Left cardiac atrium (tissue), 4 donors: ENCODE measurements at regions of chr11 and their contacts with region 1.

Region 1: GRCh38 chr11:43643898-43644620 is 36.5 kb upstream of the HSD17B12 start:
- DNase-seq: peak; percentile 89
- ATAC-seq: peak; percentile 99 to 100

Region 2: DNA sequence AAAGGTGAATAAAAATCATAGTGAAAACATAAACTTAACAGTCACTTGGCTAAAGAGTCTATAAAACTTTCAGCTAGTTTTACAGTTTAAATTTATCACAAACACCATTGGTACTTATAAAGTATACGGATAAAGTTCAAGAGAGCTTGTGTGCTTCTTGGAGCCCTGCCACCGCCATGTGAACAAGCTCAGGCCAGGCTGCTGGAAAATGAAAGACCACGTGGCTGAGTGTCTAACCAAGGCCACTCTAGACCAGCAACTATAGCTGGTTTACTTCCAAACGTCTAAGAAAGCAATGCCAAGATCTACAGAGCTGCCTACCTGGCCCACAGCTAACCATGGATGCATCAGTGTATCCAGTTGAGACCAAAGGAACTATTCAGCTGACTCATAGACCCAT is 398.6 kb before region 1 on chr11:
- intact Hi-C with region 1: no loop called
- DNase-seq: no peak
- ATAC-seq: no peak

Region 3: GRCh38 chr11:43680521-43681400 is 36.7 kb after region 1 on chr11 and contains the start of gene HSD17B12:
- intact Hi-C with region 1: loop called in 1 of 2 experiments (anchors 5 kb)
- DNase-seq: peak; percentile 100
- ATAC-seq: peak; percentile 100
- total RNA-seq, gene HSD17B12: 119 to 155 TPM

Region 4: GRCh38 chr11:43830928-43831440 is 186.9 kb after region 1 on chr11:
- intact Hi-C with region 1: loop called in 1 of 2 experiments (anchors 10 kb)
- DNase-seq: peak; percentile 40
- ATAC-seq: peak in 1 of 2 donors; percentile 98

Region 5: GRCh38 chr11:44470854-44471253 is 826.8 kb after region 1 on chr11:
- intact Hi-C with region 1: no loop called
- DNase-seq: no peak
- ATAC-seq: peak; percentile 22 to 34